ENCODE measurements at regions of chr1 and their contacts with region 1.

Region 1: DNA sequence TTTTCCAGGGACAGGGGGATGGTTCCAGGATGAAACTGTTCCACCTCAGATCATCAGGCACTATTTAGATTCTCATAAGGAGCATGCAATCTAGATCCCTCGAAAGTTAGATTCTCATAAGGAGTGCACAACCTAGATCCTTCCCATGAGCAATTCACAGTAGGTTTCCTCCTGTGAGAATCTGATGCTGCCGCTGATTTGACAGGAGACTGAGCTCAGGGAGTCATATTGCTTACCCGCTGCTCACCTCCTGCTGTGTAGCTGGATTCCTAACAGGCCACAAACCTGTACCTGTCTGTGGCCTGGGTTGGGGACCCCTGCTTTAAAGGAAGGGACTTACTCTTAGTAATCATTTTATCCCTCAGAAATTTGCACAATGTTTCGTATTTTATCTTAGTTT is 9.3 kb downstream of the CTH start:
- DNase-seq: no peak

Region 2: GRCh38 chr1:70372426-70372825 is 47.9 kb before region 1 on chr1:
- intact Hi-C with region 1: loop called (anchors 5 kb)
- DNase-seq: no peak

Region 3: DNA sequence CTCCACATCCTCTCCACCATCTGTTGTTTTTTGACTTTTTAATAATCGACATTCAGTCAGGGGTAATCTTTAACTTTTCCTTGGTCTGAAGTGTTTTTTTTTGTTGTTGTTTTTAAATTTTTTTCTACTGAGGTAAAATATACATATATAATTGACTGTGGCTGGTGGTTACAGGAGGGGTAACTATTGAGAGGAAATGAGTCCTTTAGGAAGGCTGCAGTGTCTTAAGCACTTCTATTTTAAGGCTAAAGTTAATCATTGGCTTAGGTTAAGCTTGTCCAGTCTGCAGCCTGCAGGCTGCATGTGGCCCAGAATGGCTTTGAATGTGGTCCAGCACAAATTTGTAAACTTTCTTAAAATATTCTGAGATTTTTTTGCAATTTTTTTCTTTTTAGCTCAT is 163.2 kb after region 1 on chr1:
- intact Hi-C with region 1: no loop called
- DNase-seq: no peak